CD14-positive monocyte (primary cell): ENCODE measurements at regions of chr12 and their contacts with region 1.

Region 1: DNA sequence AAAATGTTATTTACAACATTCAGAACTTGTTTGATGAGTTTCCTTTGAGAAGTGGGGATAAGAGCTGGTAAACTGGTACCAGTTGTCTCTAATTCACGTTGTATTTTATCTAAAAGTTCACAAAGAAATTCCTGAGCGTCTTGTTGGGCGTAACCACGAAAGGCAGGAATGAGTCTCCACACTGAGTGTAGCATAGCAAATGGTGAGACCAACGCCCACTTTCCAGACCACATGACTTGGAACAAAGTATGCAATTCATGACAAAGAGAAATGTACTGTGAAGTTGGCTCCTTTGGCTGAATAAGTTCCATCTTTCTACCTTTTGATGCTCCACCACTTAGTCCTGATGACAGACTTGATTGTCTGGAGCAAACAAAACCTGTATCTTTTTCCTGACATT is 18.4 kb downstream of the USP44 start:
- DNase-seq: no peak
- H3K4me3 ChIP-seq: no peak overlapping the region
- H3K4me3 Mint-ChIP-seq: no peak overlapping the region
- H3K27ac ChIP-seq: no peak overlapping the region
- H3K27ac Mint-ChIP-seq: no peak overlapping the region
- H3K4me1 ChIP-seq: no peaks in the 10 kb centered on the region
- H3K4me1 Mint-ChIP-seq: peaks cover 2% of the 10 kb centered on the region
- H3K27me3 ChIP-seq: no peaks in the 10 kb centered on the region
- H3K27me3 Mint-ChIP-seq: peaks cover 4 to 5% (median 4%) of the 10 kb centered on the region in 3 donors
- CTCF ChIP-seq: no peak

Region 2: DNA sequence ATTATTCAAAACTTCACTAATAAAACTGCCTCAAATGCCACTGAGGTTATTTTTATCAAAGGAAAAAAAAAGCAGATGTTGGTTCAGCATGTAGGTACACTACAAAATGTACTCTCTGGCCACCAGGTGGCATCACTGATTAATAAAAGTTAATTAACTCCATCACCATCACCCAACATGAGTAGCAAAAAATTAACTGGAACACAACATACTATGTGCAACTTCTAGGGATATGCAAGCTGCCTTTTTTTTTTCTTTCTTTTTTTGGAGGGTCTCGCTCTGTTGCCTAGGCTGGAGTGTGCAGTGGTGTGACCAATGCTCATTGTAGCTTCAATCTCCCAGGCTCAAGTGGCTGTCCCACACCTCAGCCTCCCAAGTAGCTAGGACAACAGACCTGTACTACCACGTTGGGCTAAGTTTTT is 415.7 kb before region 1 on chr12:
- intact Hi-C with region 1: loop called (anchors 2 to 5 kb)
- DNase-seq: peak; percentile 59 to 76 (median 63)
- H3K4me3 ChIP-seq: no peak overlapping the region
- H3K4me3 Mint-ChIP-seq: no peak overlapping the region
- H3K27ac ChIP-seq: no peak overlapping the region
- H3K27ac Mint-ChIP-seq: no peak overlapping the region
- H3K4me1 ChIP-seq: peaks cover 0 to 4% of the 10 kb centered on the region in 2 donors
- H3K4me1 Mint-ChIP-seq: peaks cover 9% of the 10 kb centered on the region
- H3K27me3 ChIP-seq: no peaks in the 10 kb centered on the region
- H3K27me3 Mint-ChIP-seq: no peaks in the 10 kb centered on the region
- CTCF ChIP-seq: peak; percentile 75

Region 3: GRCh38 chr12:95733141-95733825 is 200.4 kb after region 1 on chr12:
- intact Hi-C with region 1: no loop called
- DNase-seq: no peak
- H3K4me3 ChIP-seq: no peak overlapping the region
- H3K4me3 Mint-ChIP-seq: no peak overlapping the region
- H3K27ac ChIP-seq: no peak overlapping the region
- H3K27ac Mint-ChIP-seq: no peak overlapping the region
- H3K4me1 ChIP-seq: no peaks in the 10 kb centered on the region
- H3K4me1 Mint-ChIP-seq: no peaks in the 10 kb centered on the region
- H3K27me3 ChIP-seq: no peaks in the 10 kb centered on the region
- H3K27me3 Mint-ChIP-seq: peaks cover 0 to 9% (median 4%) of the 10 kb centered on the region in 3 donors
- CTCF ChIP-seq: no peak